Activated CD4-positive, alpha-beta T cell treated with anti-CD3 and anti-CD28 coated beads for 36 hours (primary cell): ENCODE measurements at regions of chr17 and their contacts with region 1.

Region 1: GRCh38 chr17:63919311-63919723 is 678 bp upstream of the GH1 start:
- DNase-seq: peak; percentile 84
- ATAC-seq: peak; percentile 99
- H3K4me3 Mint-ChIP-seq: no peak overlapping the region
- H3K27ac Mint-ChIP-seq: no peak overlapping the region
- H3K4me1 Mint-ChIP-seq: peaks cover 6% of the 10 kb centered on the region
- H3K27me3 Mint-ChIP-seq: no peaks in the 10 kb centered on the region

Region 2: GRCh38 chr17:63931981-63932561 is 12.8 kb after region 1 on chr17 and contains the start of gene CD79B:
- CTCF ChIA-PET with region 1: interaction called, 11 read pairs
- POLR2A ChIA-PET with region 1: no interaction called
- intact Hi-C with region 1: no loop called
- DNase-seq: peak; percentile 73
- ATAC-seq: peak; percentile 85
- H3K4me3 Mint-ChIP-seq: peak within 1 kb of the TSS; percentile 88
- H3K27ac Mint-ChIP-seq: peak within 1 kb of the TSS; percentile 93
- H3K4me1 Mint-ChIP-seq: peaks cover 15% of the 10 kb centered on the region
- H3K27me3 Mint-ChIP-seq: no peaks in the 10 kb centered on the region
- total RNA-seq, gene CD79B: 19.8 to 28.0 TPM

Region 3: DNA sequence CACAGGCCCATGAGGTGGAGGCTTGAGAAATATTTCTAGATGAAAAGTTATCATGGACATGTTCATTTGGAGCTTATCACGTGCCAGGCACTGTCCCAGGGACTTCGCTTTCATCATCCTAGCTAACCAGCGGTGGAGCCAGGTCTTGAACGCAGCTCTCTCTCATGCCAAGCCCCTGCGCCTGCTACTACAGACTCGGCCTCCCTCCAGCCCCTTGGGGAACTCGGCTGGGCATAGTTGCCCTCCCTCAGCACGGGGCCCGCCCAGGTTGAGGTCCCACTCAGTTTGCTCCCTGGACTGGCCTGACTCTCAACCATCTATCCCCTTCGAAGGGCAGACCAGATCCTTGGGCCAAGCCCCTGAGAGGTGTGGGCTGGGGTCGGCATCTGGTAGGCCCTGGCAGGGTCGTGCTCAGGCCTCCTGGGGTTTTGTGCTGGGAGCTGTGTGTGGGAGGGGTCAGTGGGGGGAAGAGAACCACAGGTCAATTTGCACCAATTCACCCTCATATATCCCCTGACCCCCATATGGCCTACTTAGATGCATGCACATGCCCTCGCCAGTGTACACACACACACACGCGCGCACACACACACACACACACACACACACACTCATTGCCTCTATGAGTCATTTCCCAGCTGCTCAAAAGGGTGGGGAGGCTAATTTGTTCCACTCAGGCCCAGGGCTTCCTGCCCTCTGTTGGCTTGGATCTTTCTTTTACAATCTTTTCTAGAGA is 65.5 kb after region 1 on chr17:
- CTCF ChIA-PET with region 1: interaction called, 20 read pairs
- POLR2A ChIA-PET with region 1: no interaction called
- intact Hi-C with region 1: loop called (anchors 1 kb)
- DNase-seq: peak; percentile 86
- ATAC-seq: peak; percentile 97
- H3K4me3 Mint-ChIP-seq: peak overlapping the region; percentile 30
- H3K27ac Mint-ChIP-seq: peak overlapping the region; percentile 78
- H3K4me1 Mint-ChIP-seq: peaks cover 23% of the 10 kb centered on the region
- H3K27me3 Mint-ChIP-seq: no peaks in the 10 kb centered on the region

Region 4: DNA sequence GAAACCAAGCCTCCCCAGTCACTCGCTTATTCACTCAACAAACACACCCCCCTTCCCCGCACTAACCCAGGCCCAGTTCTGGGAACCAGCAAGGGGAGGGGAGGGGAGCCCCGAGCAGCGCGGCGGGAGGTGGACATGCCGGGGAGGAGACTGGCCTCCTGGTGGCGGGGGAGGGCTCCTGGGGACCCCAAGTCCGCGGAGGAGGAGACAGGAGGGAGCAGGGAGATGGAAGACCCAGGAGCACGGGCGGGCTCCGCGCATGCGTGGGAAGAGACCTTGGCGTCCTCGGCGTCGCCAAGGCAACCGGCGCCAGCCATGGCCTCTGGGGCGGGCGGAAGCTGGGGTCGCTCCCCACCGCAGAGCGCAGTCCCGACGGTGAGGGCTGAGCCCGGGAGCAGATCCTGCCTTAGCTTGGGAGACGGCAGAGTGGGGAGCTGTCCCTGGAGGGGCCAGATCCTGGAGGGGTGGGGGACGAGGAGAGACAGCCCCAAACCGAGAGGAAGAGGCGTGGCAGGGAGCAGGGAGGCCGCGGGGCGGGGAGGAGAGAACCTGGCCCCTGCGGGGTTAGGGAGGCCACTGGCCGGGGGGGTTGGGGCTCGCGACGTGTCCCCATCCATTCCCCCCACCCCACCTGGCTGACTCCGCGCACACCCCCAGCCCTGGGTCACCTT is 78.9 kb after region 1 on chr17 and contains the start of gene PRR29:
- CTCF ChIA-PET with region 1: interaction called, 5 read pairs
- POLR2A ChIA-PET with region 1: no interaction called
- intact Hi-C with region 1: loop called in 1 of 2 experiments (anchors 2 kb)
- DNase-seq: peak; percentile 84
- ATAC-seq: peak; percentile 76
- H3K4me3 Mint-ChIP-seq: peak within 1 kb of the TSS; percentile 80
- H3K27ac Mint-ChIP-seq: peak within 1 kb of the TSS; percentile 31
- H3K4me1 Mint-ChIP-seq: peaks cover 30% of the 10 kb centered on the region
- H3K27me3 Mint-ChIP-seq: no peaks in the 10 kb centered on the region
- total RNA-seq, gene PRR29: 1.0 to 1.5 TPM

Region 5: GRCh38 chr17:64281962-64282727 is 362.8 kb after region 1 on chr17:
- CTCF ChIA-PET with region 1: no interaction called
- POLR2A ChIA-PET with region 1: no interaction called
- intact Hi-C with region 1: loop called in 1 of 2 experiments (anchors 10 kb)
- DNase-seq: peak; percentile 76
- ATAC-seq: peak; percentile 51
- H3K4me3 Mint-ChIP-seq: no peak overlapping the region
- H3K27ac Mint-ChIP-seq: no peak overlapping the region
- H3K4me1 Mint-ChIP-seq: no peaks in the 10 kb centered on the region
- H3K27me3 Mint-ChIP-seq: no peaks in the 10 kb centered on the region